ENCODE measurements at regions of chr17 and their contacts with region 1.

Region 1: DNA sequence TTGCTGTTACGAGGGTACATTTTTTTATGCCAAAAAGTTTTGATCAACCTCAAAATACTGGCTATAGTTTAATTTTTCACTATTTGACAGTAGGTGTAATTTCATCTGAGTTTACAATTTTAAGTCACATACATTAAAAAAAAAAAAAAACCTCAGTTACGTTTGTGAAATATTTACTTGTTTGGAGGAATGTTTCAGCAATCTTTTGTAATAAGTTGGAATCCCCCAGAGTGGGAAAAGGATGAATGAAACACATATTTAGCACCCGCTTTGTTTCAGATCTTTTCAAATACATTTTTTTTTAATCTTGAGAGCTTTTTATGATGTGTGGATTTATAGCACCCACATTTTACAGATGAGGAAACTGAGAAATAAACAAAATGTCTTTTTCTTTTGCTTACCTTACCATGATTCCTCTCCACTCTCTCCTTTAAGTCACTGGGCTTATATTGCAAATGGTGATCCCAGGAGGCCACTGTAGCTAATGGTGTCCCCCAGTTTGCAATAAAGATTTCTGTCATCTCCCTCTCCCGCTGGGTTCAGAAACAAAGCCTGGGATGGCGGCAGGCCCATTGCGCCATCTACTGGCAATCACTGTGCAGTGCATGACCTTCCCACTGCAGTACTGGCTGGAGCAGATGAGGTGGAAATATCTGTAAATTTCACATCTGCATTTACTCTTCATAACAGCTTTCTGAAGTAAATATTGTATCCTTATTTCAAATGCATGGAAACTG is 27.7 kb downstream of the TBC1D3B start:
- DNase-seq: peak; percentile 88

Region 2: DNA sequence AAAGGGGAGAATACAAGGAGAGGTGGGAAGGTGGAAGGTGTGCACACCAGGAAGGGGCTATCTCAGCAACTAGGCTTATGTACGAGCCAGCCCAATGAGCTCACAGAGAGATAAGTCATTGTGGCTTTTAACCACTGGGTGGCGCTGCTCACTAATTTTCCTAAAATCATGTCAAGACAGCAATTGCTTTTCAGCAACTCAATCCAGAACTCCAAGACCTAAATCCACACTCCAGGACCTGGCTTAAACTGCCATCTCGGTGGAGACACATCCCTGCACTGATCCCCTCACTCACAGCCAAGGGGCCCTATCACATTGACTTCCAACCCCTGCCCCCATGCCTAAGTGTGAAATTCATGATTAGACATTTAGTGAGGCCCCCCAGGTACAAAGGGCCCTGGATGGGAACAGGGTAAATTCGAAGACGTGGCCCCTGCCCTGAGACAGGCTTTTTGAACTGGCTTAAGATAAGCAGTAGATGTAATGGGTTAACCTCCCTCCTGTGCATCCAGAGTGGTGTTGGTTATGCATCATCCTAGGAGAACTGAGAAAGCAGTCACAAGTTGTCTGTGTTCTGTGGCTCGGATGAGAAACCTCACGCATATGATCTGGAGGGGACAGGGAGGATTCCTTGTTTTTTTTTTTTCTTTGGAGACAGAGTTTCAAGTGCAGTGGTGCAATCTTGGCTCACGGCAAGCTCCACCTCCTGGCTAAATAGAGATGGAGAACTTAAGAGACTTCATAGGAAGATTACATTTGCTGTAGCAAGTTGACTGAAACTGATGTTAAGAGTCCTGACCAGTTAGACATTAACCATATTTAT is 179.0 kb before region 1 on chr17:
- CTCF ChIA-PET with region 1: interaction called, 22 read pairs
- POLR2A ChIA-PET with region 1: no interaction called
- DNase-seq: peak; percentile 64

Region 3: DNA sequence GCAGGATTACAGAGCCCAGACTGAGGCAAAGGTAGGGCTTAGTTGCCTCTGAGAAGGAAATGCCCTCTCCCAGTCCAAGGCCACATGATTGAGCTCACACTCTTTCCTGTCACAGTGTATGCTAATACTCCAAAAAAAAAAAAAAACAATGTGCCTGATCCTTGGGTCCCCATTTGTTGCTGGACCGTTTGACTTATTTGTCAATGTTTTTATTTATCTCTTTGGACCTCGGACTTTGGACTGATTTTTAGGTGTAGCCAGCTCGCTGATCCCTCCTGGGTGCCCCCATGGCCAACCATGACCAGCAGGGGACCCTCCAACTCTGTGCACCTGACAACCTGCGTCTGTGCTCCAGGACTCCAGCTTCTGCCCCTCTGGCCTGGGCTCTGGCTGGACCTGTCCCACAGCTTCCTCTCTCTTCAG is 166.8 kb before region 1 on chr17:
- CTCF ChIA-PET with region 1: interaction called, 14 read pairs
- POLR2A ChIA-PET with region 1: no interaction called
- DNase-seq: no peak

Region 4: GRCh38 chr17:36104701-36105181 is 44.0 kb before region 1 on chr17:
- CTCF ChIA-PET with region 1: no interaction called
- POLR2A ChIA-PET with region 1: no interaction called
- DNase-seq: no peak

Region 5: DNA sequence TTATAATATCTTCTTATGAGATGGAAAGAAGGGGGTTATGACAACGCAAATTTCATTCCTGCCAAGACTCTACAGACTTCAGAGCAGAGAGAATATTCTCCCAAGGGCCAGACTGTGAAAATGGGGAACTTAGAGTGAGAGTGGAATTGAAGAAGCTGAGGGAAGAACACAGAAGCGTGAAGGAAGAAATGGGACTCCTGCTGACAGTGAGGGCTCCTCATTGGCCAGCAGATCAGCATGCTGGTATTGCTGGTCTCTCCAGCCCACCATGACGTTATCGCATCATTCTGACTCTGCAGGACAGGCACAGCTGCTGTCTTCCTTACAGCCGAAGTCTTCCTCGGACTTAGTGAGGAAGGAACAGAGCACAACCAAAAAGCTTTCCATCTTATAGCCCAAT is 20.8 kb before region 1 on chr17:
- CTCF ChIA-PET with region 1: interaction called, 25 read pairs
- POLR2A ChIA-PET with region 1: no interaction called
- DNase-seq: no peak

Region 6: DNA sequence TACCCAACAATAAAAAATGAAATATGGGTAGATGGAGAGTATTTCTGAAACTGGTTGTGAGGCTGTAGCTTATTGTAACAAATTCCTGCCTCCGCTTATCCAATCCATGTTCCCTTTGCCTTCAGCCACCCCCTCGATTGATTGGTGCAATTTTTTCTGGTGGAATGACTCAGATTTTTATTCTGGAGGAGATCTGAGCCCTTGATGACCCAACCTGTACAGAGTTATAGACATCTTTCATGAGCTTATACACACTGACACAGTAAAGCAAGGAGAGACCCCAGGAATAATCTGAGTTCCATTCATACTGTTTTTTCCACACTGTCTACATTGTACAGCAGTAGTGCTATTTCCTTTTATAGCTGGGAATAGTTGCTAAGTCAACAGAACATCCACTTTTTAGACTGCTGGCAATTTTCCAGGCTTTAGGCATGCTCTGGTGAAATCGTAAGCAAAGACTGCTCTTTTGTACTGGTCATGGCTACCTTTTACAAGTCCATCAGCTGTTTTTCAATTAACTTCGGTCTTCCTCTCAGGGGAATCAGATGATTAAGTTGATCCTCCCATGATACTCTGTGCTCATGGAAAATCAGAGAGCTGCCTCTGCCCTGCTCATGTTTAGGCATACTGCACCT is 15.0 kb before region 1 on chr17:
- CTCF ChIA-PET with region 1: interaction called, 25 read pairs
- POLR2A ChIA-PET with region 1: no interaction called
- DNase-seq: no peak

Measured in HEK293T (cell line).